ENCODE measurements at regions of chr1 and their contacts with region 1.

Region 1: DNA sequence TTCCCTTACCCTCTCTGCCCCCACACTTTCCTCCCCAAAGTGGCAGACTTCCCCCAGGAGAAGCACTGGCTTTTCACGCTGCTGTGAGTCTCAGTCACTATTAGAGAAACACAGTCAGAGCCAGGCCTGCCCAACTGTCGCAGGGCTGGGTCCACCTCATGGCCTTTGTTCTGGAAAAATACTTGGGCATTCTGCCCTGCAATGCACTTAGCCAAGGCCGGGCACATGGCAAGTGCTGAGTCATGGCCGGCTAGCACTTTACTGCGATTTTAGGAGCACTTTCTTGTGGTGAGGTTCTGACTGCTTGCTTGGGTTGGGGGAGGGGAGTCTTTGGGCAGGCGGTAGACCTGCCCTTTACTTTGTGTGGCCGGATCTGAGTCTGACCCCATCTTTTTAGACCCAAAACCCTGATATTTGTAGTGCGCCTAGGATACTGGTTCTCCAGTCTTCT is 7.7 kb downstream of the EPHX1 start:
- DNase-seq: peak; percentile 64 to 75
- ATAC-seq: peak; percentile 35 to 87 (median 70)
- H3K4me3 ChIP-seq: peak overlapping the region in 3 of 10 donors; percentile 8 to 26 (median 23)
- H3K27ac ChIP-seq: peak overlapping the region; percentile 70 to 97 (median 92)
- H3K4me1 ChIP-seq: peaks cover 43 to 84% (median 72%) of the 10 kb centered on the region in 9 donors
- H3K27me3 ChIP-seq: no peaks in the 10 kb centered on the region
- CTCF ChIP-seq: no peak

Region 2: DNA sequence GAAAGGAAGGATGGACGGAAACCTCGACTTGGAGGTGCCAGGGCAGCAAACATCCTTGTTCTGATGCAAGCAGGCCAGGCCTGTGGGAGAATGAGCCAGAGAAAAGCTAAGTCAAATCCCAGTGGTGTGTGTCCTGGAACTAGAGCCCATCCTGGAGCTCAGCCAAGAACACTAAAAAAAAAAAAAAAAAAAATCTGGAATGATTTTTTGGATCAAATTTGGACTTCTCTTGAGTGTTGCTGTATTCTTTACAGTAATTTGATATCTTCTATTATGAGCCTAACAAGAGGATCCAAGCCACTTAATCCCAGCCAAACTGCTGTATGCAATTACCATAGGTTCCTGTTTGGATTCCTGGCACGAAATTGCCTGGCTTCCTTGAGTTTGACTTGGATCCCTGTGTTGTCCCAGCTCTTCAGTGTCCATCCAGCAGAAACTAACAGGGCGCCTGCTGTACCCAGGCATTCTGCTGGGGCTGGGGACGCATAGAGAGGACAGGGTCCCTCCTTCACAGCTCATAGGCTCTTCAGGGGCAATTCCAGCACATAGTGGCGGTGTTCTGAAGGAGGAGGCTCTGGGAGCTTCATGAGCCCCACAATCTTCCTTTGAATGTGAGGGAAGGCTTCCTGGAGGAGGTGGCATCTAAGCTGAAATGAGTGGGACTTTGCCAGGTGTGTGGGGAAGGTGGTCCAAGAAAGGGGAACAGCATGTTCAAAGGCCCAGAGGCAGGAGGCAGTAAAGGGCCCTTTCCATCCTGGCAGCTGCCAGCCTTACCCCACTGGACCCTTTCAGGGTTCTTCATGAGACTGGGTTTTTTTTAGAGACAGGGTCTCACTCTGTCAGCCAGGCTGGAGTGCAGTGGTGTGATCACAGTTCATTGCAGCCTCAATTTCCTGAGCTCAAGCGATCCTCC is 17.0 kb after region 1 on chr1:
- intact Hi-C with region 1: loop called in 1 of 10 experiments (anchors 2 kb)
- DNase-seq: peak; percentile 56 to 68
- ATAC-seq: peak; percentile 80 to 91 (median 88)
- H3K4me3 ChIP-seq: no peak overlapping the region
- H3K27ac ChIP-seq: peak overlapping the region; percentile 10 to 79 (median 52)
- H3K4me1 ChIP-seq: peaks cover 0 to 35% (median 26%) of the 10 kb centered on the region in 9 donors
- H3K27me3 ChIP-seq: no peaks in the 10 kb centered on the region
- CTCF ChIP-seq: no peak

Region 3: DNA sequence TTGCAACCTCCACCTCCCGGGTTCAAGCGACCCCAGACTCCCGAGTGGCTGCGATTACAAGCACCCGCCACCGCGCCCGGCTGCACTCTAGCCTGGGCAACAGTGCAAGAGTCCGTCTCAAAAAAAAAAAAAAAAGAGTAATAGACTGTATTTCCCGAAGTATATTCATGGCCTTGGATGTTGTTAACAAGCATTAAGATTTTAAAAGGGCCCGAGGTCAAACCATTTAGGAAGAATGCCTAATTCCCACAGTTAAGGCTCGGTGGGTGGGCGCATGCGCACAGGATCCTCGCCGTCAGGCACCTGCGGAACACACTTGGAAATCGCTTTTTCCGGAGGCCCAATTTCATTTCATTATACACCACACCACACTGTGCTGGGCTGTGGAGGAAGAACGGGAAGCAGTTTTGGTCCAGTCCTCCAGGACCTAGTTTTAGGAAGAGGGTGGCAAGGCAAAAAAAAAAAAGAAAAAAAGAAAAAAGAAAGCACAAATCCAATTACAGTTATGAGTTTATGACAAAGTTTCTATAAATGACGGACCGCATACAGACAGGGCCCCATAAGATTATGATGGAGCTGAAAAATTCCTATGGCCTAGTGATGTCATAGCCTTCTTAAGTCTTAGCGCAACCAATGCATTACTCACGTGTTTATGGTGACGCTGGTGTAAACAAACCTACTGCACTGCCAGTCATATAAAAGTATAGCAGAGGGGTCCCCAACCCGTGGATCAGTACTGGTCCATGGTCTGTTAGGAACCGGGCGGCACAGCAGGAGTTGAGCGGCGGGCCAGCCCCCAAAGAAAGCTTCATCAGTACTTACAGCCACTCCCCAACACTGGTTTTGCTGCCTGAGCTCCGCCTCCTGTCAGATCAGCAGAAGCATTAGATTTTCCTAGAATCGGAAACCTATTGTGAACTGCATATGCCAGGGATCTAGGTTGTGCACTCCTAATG is 283.1 kb after region 1 on chr1:
- intact Hi-C with region 1: no loop called
- DNase-seq: peak; percentile 23 to 47
- ATAC-seq: peak in 7 of 8 donors; percentile 12 to 79 (median 68)
- H3K4me3 ChIP-seq: peak overlapping the region in 9 of 10 donors; percentile 27 to 60 (median 50)
- H3K27ac ChIP-seq: peak overlapping the region in 2 of 10 donors; percentile 29 to 35
- H3K4me1 ChIP-seq: peaks cover 0 to 15% (median 8%) of the 10 kb centered on the region in 9 donors
- H3K27me3 ChIP-seq: no peaks in the 10 kb centered on the region
- CTCF ChIP-seq: no peak